Thyroid gland (tissue), 4 donors: ENCODE measurements at regions of chrX and their contacts with region 1.

Region 1: GRCh38 chrX:76279000-76279399 is 106.1 kb downstream of the PBDC1 start:
- DNase-seq: peak; percentile 27 to 43
- H3K4me3 ChIP-seq: no peak overlapping the region
- H3K27ac ChIP-seq: no peak overlapping the region
- H3K4me1 ChIP-seq: no peaks in the 10 kb centered on the region
- H3K27me3 ChIP-seq: no peaks in the 10 kb centered on the region
- CTCF ChIP-seq: peak in 4 of 6 experiments; percentile 46 to 71 (median 51)
- POLR2A ChIP-seq: no peak

Region 2: DNA sequence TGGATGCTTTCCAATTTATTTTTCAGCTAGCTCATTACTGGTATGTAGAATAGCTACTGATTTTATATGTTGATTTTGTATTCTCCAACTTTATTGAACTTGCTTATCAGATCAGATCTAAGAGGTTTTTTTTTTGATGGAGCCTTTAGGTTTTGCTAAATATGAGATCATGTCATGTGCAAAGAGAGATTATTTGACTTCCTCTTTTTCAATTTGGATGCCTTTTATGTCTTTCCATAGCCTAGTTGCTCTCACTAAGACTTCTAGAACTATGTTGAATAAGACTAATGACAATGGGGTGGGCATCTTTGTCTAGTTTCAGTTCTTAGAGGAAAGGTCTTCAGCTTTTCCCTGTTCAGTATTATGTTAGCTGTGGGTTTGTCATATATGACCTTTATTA is 160.2 kb after region 1 on chrX:
- intact Hi-C with region 1: no loop called
- DNase-seq: no peak
- H3K4me3 ChIP-seq: no peak overlapping the region
- H3K27ac ChIP-seq: no peak overlapping the region
- H3K4me1 ChIP-seq: no peaks in the 10 kb centered on the region
- H3K27me3 ChIP-seq: no peaks in the 10 kb centered on the region
- CTCF ChIP-seq: no peak
- POLR2A ChIP-seq: no peak

Region 3: GRCh38 chrX:76454456-76454927 is 175.5 kb after region 1 on chrX:
- intact Hi-C with region 1: loop called (anchors 10 kb)
- DNase-seq: no peak
- H3K4me3 ChIP-seq: no peak overlapping the region
- H3K27ac ChIP-seq: no peak overlapping the region
- H3K4me1 ChIP-seq: no peaks in the 10 kb centered on the region
- H3K27me3 ChIP-seq: no peaks in the 10 kb centered on the region
- CTCF ChIP-seq: peak in 4 of 6 experiments; percentile 26 to 49 (median 44)
- POLR2A ChIP-seq: no peak